AG04449 (cell line): ENCODE measurements at regions of chr14 and their contacts with region 1.

Region 1: DNA sequence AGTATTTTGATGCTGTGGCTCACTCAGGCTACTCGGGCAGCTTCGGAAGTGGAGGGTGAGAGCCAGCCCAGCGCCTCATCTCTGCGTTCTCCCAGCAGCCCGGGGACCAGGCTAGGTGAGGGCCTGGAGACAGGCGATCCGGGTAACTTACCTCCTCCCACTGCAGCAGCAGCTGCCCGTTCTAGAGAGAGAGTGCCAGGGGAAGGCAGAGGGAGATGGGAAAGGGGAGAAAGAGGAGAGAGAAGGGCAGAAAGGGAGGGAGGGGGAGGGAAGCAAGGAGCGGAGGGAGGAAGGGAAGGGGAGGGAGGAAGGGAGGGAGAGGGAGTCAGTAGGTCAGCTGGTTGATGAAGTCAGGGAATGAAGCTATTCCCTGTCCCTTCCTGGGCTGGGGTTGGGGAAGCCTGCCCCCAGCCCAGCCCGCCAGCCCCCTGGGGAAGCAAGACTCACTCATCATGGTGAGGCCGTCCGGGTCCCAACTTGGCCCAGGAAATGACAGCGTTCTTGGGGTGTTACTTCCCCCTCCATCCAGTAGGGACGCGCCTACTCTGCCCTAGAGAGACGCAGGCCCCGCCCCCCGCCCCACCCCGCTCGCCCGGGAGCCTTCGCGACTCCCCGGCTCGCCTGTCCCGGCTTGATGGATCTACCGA is at the start of gene IFI27L2:
- DNase-seq: no peak
- H3K4me3 ChIP-seq: peak within 1 kb of the TSS; percentile 73
- CTCF ChIP-seq: peak; percentile 29

Region 2: GRCh38 chr14:94026173-94026888 is 102.9 kb before region 1 on chr14 and contains the start of gene OTUB2:
- CTCF ChIA-PET with region 1: interaction called, 348 read pairs
- POLR2A ChIA-PET with region 1: no interaction called
- DNase-seq: peak; percentile 91
- H3K4me3 ChIP-seq: peak within 1 kb of the TSS; percentile 71
- CTCF ChIP-seq: no peak

Region 3: DNA sequence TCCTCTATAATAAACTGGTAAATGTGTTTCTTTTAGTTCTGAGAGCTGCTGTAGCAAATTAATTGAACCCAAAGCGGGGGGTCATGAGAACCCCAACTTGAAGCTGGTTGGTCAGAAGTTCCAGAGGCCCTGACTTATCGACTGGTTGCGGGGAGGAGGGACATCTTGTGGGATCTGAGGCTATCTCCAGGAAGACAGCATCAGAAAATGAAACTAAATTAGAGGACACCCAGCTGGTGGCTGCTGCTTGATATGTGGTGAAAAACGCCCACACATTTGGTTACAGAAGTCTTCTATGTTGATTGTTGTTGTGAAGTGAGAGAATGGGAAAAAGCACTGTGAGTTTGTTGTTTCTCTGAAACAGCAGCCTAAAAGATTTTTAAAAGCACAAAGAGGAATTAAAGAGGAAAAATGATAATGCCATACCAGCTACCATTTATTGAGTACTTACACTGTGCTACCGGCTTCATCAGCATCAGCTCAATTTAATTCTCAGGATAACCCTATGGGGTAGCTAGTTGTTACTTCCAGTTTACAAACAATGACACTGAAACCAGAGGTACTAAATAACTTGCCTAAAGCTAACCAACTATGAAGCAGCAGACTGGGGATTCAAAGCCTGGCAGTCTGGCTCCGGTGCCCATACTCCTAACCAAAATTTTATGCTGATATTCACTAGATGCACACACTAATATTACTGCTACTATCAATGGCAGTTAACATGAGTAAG is 72.5 kb before region 1 on chr14:
- CTCF ChIA-PET with region 1: interaction called, 143 read pairs
- POLR2A ChIA-PET with region 1: interaction called, 3 read pairs
- DNase-seq: no peak
- H3K4me3 ChIP-seq: no peak overlapping the region
- CTCF ChIP-seq: no peak

Region 4: DNA sequence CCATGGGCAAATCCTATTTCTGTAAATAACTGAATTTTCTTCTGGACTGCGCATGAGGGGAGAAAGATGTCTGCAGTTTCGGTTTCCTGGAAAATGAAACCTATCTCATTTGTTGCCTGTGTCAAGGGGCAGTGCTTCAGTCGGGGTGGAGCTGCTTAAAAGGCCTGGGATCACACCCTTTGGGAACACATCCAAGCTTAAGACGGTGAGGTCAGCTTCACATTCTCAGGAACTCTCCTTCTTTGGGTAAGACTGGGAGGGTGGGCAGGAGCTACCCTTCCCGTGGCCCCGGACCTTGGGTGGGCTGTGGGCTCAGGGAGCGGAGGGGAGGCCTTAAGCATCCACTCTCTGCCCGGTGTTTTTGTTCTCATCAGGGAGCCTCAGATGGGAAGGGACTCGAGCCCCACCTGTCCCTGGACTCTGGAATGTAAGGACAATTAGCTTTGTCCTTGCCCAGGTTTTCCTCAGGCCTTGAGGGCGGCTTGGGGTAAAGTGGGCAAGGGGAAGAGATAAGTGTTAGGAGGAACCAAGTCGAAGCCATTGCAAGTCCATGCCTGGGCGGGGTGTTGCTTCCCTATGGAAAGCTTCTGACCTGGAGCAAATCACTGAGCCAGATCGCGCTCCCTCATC is 18.6 kb before region 1 on chr14 and contains the start of gene IFI27:
- CTCF ChIA-PET with region 1: interaction called, 46 read pairs
- POLR2A ChIA-PET with region 1: interaction called, 3 read pairs
- DNase-seq: no peak
- H3K4me3 ChIP-seq: no peak within 1 kb of the TSS
- CTCF ChIP-seq: no peak

Region 5: GRCh38 chr14:94180655-94181271 is 51.5 kb after region 1 on chr14:
- CTCF ChIA-PET with region 1: interaction called, 39 read pairs
- POLR2A ChIA-PET with region 1: no interaction called
- DNase-seq: no peak
- H3K4me3 ChIP-seq: no peak overlapping the region; the same call in 1 of the 2 replicates
- CTCF ChIP-seq: peak; percentile 8

Region 6: DNA sequence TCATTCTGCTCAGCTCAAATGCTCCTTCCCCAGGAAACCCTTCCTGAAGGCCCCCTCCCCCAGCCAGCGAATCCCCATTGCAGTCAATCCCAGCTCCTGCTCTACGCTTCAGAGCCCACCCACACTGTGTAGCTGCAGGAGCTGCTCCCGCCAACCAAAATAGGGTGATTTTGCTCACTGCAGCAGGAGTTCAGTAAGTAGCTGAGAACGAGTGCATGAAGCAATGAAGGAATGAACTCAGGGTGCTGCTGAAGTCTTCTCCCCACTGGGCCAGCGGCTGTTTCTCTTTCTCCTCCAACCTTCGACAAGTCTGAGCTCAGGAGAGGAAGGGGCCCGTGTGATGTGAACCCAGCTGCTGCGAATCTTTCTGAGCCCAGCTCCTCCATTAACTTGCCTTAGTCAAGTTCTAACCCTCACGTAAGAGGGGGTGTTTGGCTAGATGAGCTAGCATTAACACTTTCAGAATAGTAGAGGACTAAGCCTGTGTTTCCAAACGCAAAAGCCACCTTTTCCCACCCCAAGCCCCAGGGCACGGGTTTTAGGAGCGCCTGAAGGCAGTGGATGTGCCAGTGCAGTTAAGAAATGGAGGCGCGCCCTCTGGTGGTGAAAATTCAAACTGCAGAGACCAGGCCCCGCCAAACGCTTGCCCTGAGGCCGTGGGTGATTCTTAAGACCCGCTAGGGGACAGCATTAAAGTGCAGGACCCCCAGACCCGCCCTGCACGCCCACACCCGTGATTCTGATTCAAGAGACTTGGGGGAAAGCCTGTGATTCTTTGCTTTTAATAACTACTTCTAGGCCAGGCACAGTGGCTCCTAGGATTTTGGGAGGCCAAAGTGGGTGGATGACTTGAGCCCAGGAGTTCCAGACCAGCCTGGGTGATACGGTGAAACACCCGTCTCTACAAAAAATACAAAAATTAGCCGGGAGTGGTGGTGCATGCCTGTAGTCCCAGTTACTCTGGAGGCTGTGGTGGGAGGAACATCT is 420.1 kb after region 1 on chr14:
- CTCF ChIA-PET with region 1: interaction called, 22 read pairs
- POLR2A ChIA-PET with region 1: no interaction called
- DNase-seq: no peak
- H3K4me3 ChIP-seq: no peak overlapping the region
- CTCF ChIP-seq: peak; percentile 83